Activated CD8-positive, alpha-beta T cell treated with anti-CD3 and anti-CD28 coated beads for 36 hours (primary cell): ENCODE measurements at regions of chr19 and their contacts with region 1.

Region 1: GRCh38 chr19:19410275-19411192 is 5.1 kb downstream of the GATAD2A start:
- DNase-seq: peak; percentile 73
- ATAC-seq: peak; percentile 75
- H3K4me3 Mint-ChIP-seq: no peak overlapping the region
- H3K27ac Mint-ChIP-seq: peak overlapping the region; percentile 62
- H3K4me1 Mint-ChIP-seq: peaks cover 74% of the 10 kb centered on the region
- H3K27me3 Mint-ChIP-seq: no peaks in the 10 kb centered on the region
- CTCF ChIP-seq: no peak

Region 2: GRCh38 chr19:19459707-19460251 is 49.2 kb after region 1 on chr19:
- CTCF ChIA-PET with region 1: interaction called, 4 read pairs
- POLR2A ChIA-PET with region 1: interaction called, 32 read pairs
- intact Hi-C with region 1: loop called (anchors 5 kb)
- DNase-seq: peak; percentile 89
- ATAC-seq: peak; percentile 67
- H3K4me3 Mint-ChIP-seq: peak overlapping the region; percentile 89
- H3K27ac Mint-ChIP-seq: peak overlapping the region; percentile 100
- H3K4me1 Mint-ChIP-seq: peaks cover 85% of the 10 kb centered on the region
- H3K27me3 Mint-ChIP-seq: no peaks in the 10 kb centered on the region
- CTCF ChIP-seq: no peak

Region 3: DNA sequence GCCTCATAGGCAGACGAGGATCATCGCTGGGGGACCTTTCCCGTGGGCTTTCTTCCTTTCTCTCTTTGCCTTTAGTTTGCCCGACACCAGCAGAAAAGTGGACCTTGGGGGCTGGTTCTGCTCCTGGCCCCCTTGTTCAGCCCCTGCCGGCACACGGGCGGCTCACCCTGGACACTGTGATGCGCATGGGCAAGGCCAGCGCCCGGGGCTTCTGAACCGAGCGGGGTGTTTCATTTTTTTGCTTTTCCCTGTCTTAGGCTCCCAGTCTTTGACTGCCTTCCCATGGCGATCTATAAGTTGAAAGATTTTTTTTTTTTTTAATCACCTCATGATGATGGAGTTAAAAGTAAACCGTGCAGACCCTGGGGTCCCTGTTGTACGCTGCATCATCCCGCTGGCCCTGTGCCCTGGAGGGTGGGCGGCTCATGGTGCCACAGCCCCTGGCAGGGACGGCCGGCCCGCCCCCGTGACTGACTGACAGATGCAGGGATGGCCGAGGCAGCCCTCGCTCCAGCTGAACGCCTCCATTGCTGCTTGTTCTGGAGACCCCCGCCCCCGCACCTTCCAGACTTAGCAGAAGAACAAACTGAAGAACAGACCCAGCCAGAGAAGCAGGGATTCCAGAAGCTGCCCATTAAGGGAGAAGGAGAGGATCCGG is 95.3 kb after region 1 on chr19:
- CTCF ChIA-PET with region 1: no interaction called
- POLR2A ChIA-PET with region 1: no interaction called
- intact Hi-C with region 1: no loop called
- DNase-seq: no peak
- ATAC-seq: no peak
- H3K4me3 Mint-ChIP-seq: no peak overlapping the region
- H3K27ac Mint-ChIP-seq: no peak overlapping the region
- H3K4me1 Mint-ChIP-seq: no peaks in the 10 kb centered on the region
- H3K27me3 Mint-ChIP-seq: no peaks in the 10 kb centered on the region
- CTCF ChIP-seq: no peak

Region 4: GRCh38 chr19:19515764-19516519 is 105.4 kb after region 1 on chr19 and contains the start of gene NDUFA13:
- CTCF ChIA-PET with region 1: interaction called, 5 read pairs
- POLR2A ChIA-PET with region 1: interaction called, 11 read pairs
- intact Hi-C with region 1: no loop called
- DNase-seq: peak; percentile 96
- ATAC-seq: peak; percentile 92
- H3K4me3 Mint-ChIP-seq: peak within 1 kb of the TSS; percentile 93
- H3K27ac Mint-ChIP-seq: peak within 1 kb of the TSS; percentile 94
- H3K4me1 Mint-ChIP-seq: peaks cover 33% of the 10 kb centered on the region
- H3K27me3 Mint-ChIP-seq: no peaks in the 10 kb centered on the region
- CTCF ChIP-seq: no peak
- total RNA-seq, gene NDUFA13: 298 to 310 TPM